ENCODE measurements at regions of chr1 and their contacts with region 1.

Region 1: GRCh38 chr1:153572569-153573015 is 6.9 kb upstream of the S100A2 start:
- DNase-seq: peak; percentile 92
- H3K4me3 Mint-ChIP-seq: peak overlapping the region; percentile 28
- H3K27ac Mint-ChIP-seq: peak overlapping the region; percentile 73
- H3K4me1 Mint-ChIP-seq: peaks cover 64% of the 10 kb centered on the region
- H3K27me3 Mint-ChIP-seq: no peaks in the 10 kb centered on the region
- CTCF ChIP-seq: peak; percentile 79

Region 2: DNA sequence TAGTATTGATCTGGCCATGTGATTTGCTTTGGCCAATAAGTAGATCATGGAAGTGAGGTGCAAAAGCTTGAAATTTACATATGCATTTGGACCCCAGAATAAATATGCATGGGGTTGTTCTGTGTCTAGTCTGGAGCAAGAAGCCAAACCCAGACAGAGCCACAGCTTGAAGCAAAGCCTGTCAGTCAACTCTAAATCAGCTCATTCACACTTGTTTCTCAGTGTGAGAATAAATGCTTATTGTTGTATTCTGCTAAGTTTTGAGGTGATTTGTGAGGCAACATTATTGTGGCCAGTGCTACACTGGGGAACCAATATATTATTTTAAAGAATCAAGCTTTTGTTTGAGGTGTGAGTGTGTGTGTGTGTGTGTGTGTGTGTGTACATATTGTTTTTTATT is 247.7 kb before region 1 on chr1:
- CTCF ChIA-PET with region 1: no interaction called
- intact Hi-C with region 1: no loop called
- DNase-seq: no peak
- H3K4me3 Mint-ChIP-seq: no peak overlapping the region
- H3K27ac Mint-ChIP-seq: no peak overlapping the region
- H3K4me1 Mint-ChIP-seq: no peaks in the 10 kb centered on the region
- H3K27me3 Mint-ChIP-seq: peaks cover 25% of the 10 kb centered on the region
- CTCF ChIP-seq: no peak

Region 3: DNA sequence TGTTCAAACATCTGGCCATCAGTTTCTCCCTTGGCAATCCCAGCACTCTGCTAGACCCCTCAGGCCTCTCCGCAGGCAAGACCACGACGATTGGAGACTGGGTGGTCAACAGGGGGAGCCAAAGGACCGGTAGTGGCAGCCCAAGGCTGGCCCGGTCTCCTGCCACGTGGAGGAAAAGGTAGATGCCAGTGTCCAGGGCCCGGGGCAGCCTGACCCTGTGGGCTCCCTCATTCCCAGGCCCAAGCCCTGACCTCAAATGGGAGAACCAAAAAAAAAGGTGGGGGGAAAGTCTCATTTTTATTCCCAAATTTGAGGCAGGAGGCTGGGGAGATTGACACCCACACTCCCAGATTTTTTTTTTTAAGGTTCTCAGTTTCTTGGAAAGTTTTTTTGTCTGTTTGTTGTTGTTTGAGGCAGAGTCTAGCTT is 61.6 kb before region 1 on chr1:
- CTCF ChIA-PET with region 1: interaction called, 28 read pairs
- intact Hi-C with region 1: loop called (anchors 1 kb)
- DNase-seq: peak; percentile 97
- H3K4me3 Mint-ChIP-seq: no peak overlapping the region
- H3K27ac Mint-ChIP-seq: peak overlapping the region; percentile 82
- H3K4me1 Mint-ChIP-seq: peaks cover 82% of the 10 kb centered on the region
- H3K27me3 Mint-ChIP-seq: no peaks in the 10 kb centered on the region
- CTCF ChIP-seq: peak; percentile 97

Region 4: DNA sequence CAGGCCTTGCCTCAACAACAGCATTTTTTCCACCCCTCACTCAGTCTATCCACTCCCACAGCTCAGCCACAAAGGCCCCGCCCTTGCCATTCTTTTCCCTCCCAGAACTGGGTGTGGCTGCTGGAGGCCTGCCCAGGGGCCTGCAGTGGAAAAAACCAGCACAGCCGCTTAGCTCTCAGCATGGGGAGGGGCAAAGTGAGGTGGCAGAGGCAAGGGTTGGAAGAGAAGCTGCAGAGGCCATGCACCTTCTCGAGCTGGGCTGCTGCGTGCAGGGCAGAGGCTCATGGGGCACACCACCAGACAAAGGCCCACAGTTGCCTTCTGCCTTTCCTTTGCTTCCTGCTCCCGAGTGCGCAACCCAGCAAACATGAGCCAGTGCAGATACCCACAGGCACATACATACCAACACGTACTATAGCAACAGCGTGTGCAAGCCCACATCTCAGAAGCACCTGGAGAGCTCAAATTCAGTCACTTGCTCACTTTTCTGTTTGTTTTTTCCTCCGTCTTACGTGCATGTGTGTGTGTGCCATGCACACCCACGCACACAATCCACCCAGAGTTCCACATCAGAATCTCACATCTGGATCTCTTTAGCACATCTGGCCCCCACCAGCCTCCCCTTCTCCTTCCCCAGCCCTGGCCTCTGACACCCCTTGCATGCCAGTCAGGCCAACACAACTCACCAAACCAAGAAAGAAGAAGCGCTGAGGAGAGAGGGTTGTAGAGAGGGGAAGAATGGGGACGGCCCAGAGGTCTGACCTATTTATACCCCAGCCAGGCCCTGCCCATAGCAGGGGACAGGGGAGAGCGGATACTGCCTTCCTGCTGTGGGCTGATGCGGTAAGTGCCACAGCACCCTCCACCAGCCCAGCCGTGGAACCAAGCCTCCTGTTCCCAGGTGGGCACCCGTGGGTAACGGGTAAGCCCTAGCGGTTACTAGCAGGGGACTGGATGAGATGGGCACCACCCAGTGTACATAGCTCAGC is 27.2 kb before region 1 on chr1 and contains the start of gene S100A4:
- CTCF ChIA-PET with region 1: interaction called, 12 read pairs
- intact Hi-C with region 1: no loop called
- DNase-seq: peak; percentile 98
- H3K4me3 Mint-ChIP-seq: peak within 1 kb of the TSS; percentile 68
- H3K27ac Mint-ChIP-seq: peak within 1 kb of the TSS; percentile 94
- H3K4me1 Mint-ChIP-seq: peaks cover 87% of the 10 kb centered on the region
- H3K27me3 Mint-ChIP-seq: no peaks in the 10 kb centered on the region
- CTCF ChIP-seq: no peak
- total RNA-seq, gene S100A4: 19.8 and 20.5 TPM in 2 replicates

Region 5: GRCh38 chr1:153617675-153618074 is 45.1 kb after region 1 on chr1:
- CTCF ChIA-PET with region 1: interaction called, 24 read pairs
- intact Hi-C with region 1: loop called (anchors 2 kb)
- DNase-seq: peak; percentile 83
- H3K4me3 Mint-ChIP-seq: no peak overlapping the region
- H3K27ac Mint-ChIP-seq: peak overlapping the region; percentile 87
- H3K4me1 Mint-ChIP-seq: peaks cover 46% of the 10 kb centered on the region
- H3K27me3 Mint-ChIP-seq: no peaks in the 10 kb centered on the region
- CTCF ChIP-seq: peak; percentile 33

Region 6: DNA sequence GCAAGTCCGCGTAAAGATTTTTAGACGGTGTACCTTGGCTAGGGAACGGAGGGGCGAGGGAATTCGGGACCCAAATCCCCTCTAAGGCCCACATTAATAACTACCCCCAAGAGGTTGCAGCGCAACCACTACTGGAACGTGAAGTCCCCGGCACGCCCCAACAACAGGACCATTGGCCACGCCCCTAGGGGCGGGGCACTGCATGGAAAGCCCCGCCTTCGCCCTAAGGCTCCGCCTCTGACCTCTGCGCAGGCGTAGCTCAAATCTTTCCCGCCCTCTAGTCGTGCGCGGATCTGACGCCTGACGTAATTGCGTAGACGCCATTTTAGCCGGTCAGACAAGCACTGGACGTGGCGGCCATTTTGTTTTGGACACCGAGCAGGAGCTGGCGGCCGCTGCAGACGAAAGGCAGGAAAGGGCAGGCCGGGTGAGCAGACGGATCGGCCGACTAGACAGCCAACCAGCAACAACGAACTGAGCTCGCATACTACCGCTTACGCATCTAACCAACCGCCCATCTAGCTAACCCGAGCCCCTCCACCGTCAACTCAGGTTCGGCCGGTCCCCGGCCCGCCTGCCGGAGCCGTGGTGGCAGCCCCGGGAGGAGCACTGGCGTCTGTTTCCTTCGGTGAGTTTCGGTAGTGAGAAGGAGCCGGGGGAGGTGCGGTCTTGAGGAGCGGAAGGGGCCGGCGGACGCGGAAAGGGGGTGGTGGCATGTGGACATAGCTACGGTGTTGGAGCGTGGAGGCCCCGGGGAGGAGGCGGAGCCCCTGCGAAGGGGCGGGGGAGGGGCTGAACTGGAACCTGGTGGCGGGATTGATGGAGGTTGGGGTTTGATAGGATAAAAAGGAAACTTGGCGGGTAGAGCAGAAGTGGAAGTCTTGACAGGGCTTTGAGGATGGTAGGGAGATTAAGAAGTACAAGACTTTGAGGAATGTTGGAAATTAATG is 61.4 kb after region 1 on chr1 and contains the start of gene CHTOP:
- CTCF ChIA-PET with region 1: interaction called, 28 read pairs
- intact Hi-C with region 1: loop called (anchors 2 kb)
- DNase-seq: peak; percentile 99
- H3K4me3 Mint-ChIP-seq: peak within 1 kb of the TSS; percentile 98
- H3K27ac Mint-ChIP-seq: peak within 1 kb of the TSS; percentile 98
- H3K4me1 Mint-ChIP-seq: peaks cover 44% of the 10 kb centered on the region
- H3K27me3 Mint-ChIP-seq: no peaks in the 10 kb centered on the region
- CTCF ChIP-seq: no peak
- total RNA-seq, gene CHTOP: 93.7 and 100 TPM in 2 replicates

Region 7: DNA sequence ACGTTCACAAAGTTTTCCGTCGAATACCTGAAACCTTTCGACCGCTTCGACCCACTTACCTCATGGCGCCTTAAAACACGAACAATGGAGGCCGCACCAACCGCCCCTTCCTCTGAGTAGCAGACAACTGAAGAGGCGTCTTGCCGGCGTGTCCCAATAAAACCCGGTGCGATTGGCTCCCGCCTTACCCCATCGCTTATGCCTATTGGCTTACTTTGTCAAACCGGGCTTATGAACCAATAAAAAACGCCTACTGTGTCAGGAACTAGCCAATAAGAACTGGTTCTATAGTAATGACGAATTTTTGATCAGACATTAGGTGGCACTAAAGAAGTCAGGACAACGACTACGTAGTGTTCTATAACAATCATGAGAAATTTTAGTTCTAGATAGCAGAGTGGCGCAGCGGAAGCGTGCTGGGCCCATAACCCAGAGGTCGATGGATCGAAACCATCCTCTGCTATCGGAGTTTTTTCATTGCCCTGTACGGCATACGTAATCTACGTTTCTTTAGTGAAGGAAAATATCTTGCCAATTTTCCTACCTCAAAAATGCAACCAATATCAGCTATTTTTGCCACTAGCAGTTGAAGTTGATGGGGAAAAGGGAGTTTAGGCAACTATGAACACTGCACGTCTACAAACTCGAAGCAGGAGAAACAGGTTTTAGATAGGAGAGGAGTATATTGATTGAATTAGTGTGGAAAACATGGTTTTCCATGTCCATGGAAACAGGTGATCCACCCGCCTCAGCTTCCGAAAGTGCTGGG is 98.5 kb after region 1 on chr1 and contains the start of gene ILF2:
- CTCF ChIA-PET with region 1: interaction called, 5 read pairs
- intact Hi-C with region 1: loop called (anchors 5 kb)
- DNase-seq: peak; percentile 98
- H3K4me3 Mint-ChIP-seq: no peak within 1 kb of the TSS
- H3K27ac Mint-ChIP-seq: no peak within 1 kb of the TSS
- H3K4me1 Mint-ChIP-seq: peaks cover 11% of the 10 kb centered on the region
- H3K27me3 Mint-ChIP-seq: no peaks in the 10 kb centered on the region
- CTCF ChIP-seq: peak; percentile 24
- total RNA-seq, gene ILF2: 253 and 292 TPM in 2 replicates